ENCODE measurements at regions of chr2 and their contacts with region 1.

Region 1: DNA sequence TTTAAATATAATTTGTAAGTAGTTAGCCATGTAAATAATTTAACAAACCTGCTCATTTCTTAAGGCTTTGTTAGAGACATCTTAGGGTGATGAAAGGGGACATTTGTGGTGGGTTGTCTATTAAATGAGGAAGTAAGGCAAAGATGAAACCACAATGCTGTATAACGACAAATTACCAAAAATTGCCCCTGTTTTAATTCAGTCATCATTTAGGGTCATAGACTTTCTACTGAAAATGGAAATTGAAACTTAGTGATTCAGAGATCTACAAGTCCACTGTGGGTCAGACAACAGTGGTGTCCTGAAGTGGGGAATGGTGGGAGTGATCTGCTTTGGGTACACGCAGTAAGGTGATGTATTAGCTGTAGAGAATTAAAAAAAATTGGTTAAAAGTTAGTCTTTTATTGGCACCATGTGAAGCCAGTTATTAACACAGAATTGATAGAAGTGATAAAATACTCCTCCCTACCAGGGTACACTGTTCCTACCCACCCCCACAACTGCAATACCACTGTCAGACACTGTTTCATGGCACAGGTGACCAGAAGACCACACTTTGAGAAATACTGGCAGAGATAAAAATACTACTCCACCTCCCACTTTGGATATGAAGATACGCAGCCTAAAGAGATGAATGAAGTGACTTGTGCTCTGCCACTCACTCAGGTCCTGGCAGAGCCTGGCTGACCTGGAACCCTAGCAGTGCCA is 13.4 kb downstream of the CERS6 start:
- DNase-seq: no peak
- ATAC-seq: no peak
- H3K4me3 ChIP-seq: no peak overlapping the region
- H3K27ac ChIP-seq: no peak overlapping the region
- H3K4me1 ChIP-seq: peaks cover 4% of the 10 kb centered on the region
- H3K27me3 ChIP-seq: no peaks in the 10 kb centered on the region

Region 2: DNA sequence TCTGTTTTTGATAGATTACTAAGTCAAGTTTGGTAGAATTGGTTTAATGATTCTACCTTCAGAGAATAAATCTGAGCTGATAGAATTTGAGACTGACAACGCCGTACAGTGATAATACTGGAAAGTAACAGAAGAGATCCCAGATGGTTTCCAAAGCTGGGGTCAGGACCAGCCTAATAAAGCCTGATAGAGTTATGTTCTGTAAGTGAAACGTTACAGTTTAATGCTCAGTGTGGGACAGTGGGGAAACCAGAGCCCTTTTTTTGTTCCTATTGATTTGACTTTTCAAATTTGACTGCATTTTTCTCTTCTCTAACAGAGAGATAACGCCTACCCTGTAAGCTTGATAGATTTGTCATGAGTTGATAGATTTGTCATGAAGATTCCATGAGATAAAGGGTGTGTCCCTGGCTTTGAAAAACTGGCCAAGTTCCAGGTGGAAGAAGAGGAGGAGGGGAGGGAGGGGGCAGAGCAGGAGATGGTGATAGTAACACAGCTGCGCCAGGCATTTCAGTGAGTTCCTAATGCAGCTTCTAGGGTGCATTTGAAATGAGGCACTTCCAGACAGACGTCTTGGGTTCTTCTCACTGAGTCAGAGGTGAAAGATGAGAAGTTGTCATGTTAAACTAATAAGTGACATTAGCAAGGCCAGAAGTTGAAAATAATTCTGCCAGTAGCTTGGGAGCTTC is 51.8 kb after region 1 on chr2:
- intact Hi-C with region 1: loop called in 1 of 4 experiments (anchors 10 kb)
- DNase-seq: no peak
- ATAC-seq: peak; percentile 16 to 40
- H3K4me3 ChIP-seq: no peak overlapping the region
- H3K27ac ChIP-seq: peak overlapping the region; percentile 56
- H3K4me1 ChIP-seq: peaks cover 5% of the 10 kb centered on the region
- H3K27me3 ChIP-seq: no peaks in the 10 kb centered on the region

Measured in right cardiac atrium (tissue), 5 donors.